Activated CD4-positive, alpha-beta T cell treated with anti-CD3 and anti-CD28 coated beads for 36 hours (primary cell): ENCODE measurements at regions of chr9 and their contacts with region 1.

Region 1: DNA sequence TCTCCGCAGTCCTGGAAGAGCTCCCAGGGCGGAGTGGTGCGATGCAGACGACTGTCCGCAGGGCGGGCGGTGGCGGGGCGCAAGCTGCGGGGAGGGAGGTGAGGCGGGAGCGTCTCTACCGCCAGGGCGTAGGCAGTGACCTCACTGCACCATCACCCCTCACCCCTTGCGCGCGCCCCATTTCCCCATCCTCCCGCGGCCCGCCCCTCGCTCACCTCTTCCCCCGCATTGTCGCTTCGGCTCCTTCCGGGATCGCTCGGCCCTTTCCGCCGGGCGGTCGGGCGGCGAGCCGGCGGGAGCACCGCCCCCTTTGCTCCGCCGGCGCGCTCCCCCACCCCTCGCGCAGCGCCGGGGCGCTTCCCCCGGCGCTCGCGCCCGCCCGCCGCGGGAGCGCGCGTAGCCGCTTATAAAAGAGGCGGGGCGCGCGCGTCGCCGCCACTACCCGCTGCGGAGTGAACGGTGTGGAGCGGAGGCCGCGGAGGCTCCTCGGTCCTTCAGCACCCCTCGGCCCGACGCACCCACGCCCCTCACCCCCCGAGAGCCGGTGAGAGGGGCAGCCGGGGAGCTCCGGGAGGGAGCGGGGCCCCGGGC is at the start of gene SPTAN1:
- DNase-seq: peak; percentile 98
- ATAC-seq: peak; percentile 78
- H3K4me3 Mint-ChIP-seq: no peak within 1 kb of the TSS
- H3K27ac Mint-ChIP-seq: peak within 1 kb of the TSS; percentile 97
- H3K4me1 Mint-ChIP-seq: peaks cover 34% of the 10 kb centered on the region
- H3K27me3 Mint-ChIP-seq: no peaks in the 10 kb centered on the region
- total RNA-seq, gene SPTAN1: 192 to 269 TPM

Region 2: GRCh38 chr9:127980706-127981558 is 571.3 kb before region 1 on chr9 and contains the start of gene EEIG1:
- CTCF ChIA-PET with region 1: no interaction called
- POLR2A ChIA-PET with region 1: no interaction called
- intact Hi-C with region 1: loop called in 1 of 2 experiments (anchors 5 kb)
- DNase-seq: peak; percentile 99
- ATAC-seq: peak; percentile 87
- H3K4me3 Mint-ChIP-seq: peak within 1 kb of the TSS; percentile 97
- H3K27ac Mint-ChIP-seq: peak within 1 kb of the TSS; percentile 98
- H3K4me1 Mint-ChIP-seq: peaks cover 47% of the 10 kb centered on the region
- H3K27me3 Mint-ChIP-seq: no peaks in the 10 kb centered on the region
- total RNA-seq, gene EEIG1: 56.2 to 58.4 TPM

Region 3: GRCh38 chr9:128322404-128323211 is 229.6 kb before region 1 on chr9 and contains the starts of genes COQ4 and TRUB2:
- CTCF ChIA-PET with region 1: no interaction called
- POLR2A ChIA-PET with region 1: no interaction called
- intact Hi-C with region 1: loop called in 1 of 2 experiments (anchors 1 kb)
- DNase-seq: peak; percentile 96
- ATAC-seq: peak; percentile 90
- H3K4me3 Mint-ChIP-seq: peak within 1 kb of the TSS; percentile 87
- H3K27ac Mint-ChIP-seq: peak within 1 kb of the TSS; percentile 93
- H3K4me1 Mint-ChIP-seq: peaks cover 19% of the 10 kb centered on the region
- H3K27me3 Mint-ChIP-seq: no peaks in the 10 kb centered on the region
- total RNA-seq, gene COQ4: 32.1 to 38.8 TPM
- total RNA-seq, gene TRUB2: 29.5 to 37.5 TPM

Region 4: DNA sequence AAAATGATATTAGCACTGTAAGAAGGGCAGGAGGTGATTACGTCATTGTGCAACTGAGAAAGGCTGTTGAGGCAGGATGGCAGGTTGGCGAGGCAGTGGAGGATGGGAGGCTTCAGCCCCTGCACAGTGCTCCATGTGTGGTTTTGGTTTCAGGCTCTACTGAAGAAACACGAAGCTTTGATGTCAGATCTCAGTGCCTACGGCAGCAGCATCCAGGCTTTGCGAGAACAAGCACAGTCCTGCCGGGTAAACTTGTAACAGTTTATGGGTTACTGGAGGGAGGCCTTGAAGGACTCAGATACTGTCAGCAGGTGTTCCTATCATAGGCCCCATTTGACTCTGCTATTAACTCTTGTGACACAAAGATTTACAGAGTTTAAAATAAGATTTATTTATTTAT is 35.2 kb after region 1 on chr9:
- CTCF ChIA-PET with region 1: interaction called, 3 read pairs
- POLR2A ChIA-PET with region 1: interaction called, 3 read pairs
- intact Hi-C with region 1: loop called (anchors 1 to 5 kb)
- DNase-seq: peak; percentile 82
- ATAC-seq: peak; percentile 99
- H3K4me3 Mint-ChIP-seq: no peak overlapping the region
- H3K27ac Mint-ChIP-seq: peak overlapping the region; percentile 85
- H3K4me1 Mint-ChIP-seq: peaks cover 15% of the 10 kb centered on the region
- H3K27me3 Mint-ChIP-seq: no peaks in the 10 kb centered on the region

Region 5: DNA sequence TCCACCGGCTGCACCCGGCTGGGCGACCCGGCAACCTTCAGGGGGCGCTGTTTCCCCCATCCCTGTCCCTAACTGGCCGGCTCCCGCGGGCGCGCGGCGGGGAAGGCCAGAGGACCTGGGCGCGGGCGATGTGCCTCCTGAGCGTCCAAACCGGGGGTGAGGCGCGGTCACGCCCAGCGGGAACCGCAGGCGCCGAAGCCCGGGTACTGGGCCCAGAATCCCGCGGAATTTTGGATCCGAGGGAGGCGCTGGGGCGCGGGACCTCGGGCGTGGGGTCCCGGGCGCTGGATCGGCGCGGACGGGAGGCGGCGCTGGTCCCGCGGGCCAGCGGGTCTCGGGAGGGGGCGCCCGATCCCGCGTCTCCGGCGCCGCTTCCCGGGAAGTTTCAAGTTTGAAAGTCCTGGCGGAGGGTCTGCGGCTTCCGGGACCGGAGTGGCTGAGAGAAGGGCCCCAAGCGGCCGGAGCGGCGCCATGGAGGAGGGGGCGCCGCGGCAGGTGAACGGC is 150.2 kb after region 1 on chr9 and contains the start of gene PKN3:
- CTCF ChIA-PET with region 1: interaction called, 3 read pairs
- POLR2A ChIA-PET with region 1: no interaction called
- intact Hi-C with region 1: loop called in 1 of 2 experiments (anchors 5 kb)
- DNase-seq: peak; percentile 95
- ATAC-seq: peak; percentile 85
- H3K4me3 Mint-ChIP-seq: peak within 1 kb of the TSS; percentile 73
- H3K27ac Mint-ChIP-seq: peak within 1 kb of the TSS; percentile 74
- H3K4me1 Mint-ChIP-seq: peaks cover 10% of the 10 kb centered on the region
- H3K27me3 Mint-ChIP-seq: no peaks in the 10 kb centered on the region
- total RNA-seq, gene PKN3: 14.6 to 14.9 TPM

Region 6: DNA sequence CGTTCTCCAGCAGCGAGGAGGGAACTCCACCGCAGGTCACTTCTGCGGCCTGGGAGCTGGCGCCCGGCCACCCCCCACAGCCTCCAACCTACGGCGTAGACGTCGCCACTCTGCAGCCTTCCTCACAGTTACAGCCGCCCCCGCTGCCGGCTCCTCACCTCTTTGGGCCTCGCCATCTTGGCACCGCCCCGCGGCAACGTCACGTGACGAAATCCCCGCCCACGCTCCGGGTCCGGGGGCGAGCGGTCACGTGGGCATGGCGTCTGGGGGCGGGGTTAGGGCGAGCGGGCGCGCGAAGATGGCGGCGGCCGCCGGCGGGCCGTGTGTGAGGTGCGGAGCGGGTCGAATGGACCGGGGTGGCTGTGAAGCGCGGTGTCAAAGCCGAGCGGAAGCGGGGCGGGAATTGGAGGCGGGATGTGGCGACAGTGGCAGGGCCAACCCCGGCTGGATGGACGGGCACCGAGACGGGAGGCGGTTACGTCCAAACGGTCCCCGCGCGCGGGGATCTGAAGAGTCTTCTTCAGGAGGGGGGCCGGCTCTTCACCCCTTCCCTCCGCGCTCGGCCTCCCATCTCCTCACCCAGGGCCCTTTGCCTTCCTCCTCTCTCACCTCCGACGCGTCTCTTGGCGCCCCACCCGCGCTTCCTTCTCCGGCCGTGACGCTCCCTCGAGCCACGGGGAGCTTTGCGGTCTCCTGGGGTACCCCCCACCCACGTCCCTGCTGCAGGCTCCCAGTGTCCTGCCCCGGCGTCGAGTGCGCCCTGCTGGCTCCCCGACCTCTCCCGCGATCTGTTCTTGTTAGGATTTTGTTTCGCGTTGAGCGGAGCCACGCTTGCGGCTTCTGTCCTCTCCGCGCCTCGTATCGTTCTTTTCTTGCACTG is 395.4 kb after region 1 on chr9 and contains the starts of genes DOLK and NUP188:
- CTCF ChIA-PET with region 1: interaction called, 3 read pairs
- POLR2A ChIA-PET with region 1: interaction called, 3 read pairs
- intact Hi-C with region 1: loop called in 1 of 2 experiments (anchors 1 kb)
- DNase-seq: peak; percentile 99
- ATAC-seq: peak; percentile 80
- H3K4me3 Mint-ChIP-seq: peak within 1 kb of the TSS; percentile 89
- H3K27ac Mint-ChIP-seq: peak within 1 kb of the TSS; percentile 95
- H3K4me1 Mint-ChIP-seq: peaks cover 29% of the 10 kb centered on the region
- H3K27me3 Mint-ChIP-seq: no peaks in the 10 kb centered on the region
- total RNA-seq, gene DOLK: 4.8 to 5.0 TPM
- total RNA-seq, gene NUP188: 102 to 124 TPM